Spleen (tissue), 13 donors: ENCODE measurements at regions of chr4 and their contacts with region 1.

Region 1: DNA sequence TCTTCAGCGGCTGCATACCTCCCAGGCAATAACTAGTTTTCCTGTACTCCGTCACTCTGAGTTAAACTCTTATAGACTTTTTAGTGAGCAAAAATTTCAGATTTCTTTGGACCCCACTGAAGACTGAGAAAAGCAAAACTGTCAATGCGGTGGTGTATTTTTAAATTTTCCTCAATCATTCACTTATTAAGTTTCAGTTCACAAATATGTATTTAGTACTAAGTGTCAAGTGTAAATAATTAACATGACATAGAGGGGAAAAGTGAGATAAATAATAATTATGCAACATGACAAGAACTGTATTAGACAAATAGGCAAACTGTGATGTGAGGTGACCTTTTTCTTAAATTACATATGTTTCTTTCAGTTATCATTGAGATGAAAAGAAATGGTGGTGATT is 124.4 kb downstream of the NAF1 start:
- DNase-seq: no peak
- H3K4me3 ChIP-seq: no peak overlapping the region
- H3K27ac ChIP-seq: no peak overlapping the region
- H3K4me1 ChIP-seq: no peaks in the 10 kb centered on the region
- H3K27me3 ChIP-seq: no peaks in the 10 kb centered on the region
- CTCF ChIP-seq: no peak
- POLR2A ChIP-seq: no peak

Region 2: GRCh38 chr4:162497564-162498167 is 544.6 kb before region 1 on chr4:
- intact Hi-C with region 1: loop called (anchors 10 kb)
- DNase-seq: no peak
- H3K4me3 ChIP-seq: no peak overlapping the region
- H3K27ac ChIP-seq: no peak overlapping the region
- H3K4me1 ChIP-seq: no peaks in the 10 kb centered on the region
- H3K27me3 ChIP-seq: peaks cover 0 to 4% (median 0%) of the 10 kb centered on the region in 7 donors
- CTCF ChIP-seq: peak; percentile 36 to 76 (median 65)
- POLR2A ChIP-seq: no peak

Region 3: GRCh38 chr4:162878096-162878495 is 164.2 kb before region 1 on chr4:
- intact Hi-C with region 1: no loop called
- DNase-seq: no peak
- H3K4me3 ChIP-seq: no peak overlapping the region
- H3K27ac ChIP-seq: no peak overlapping the region
- H3K4me1 ChIP-seq: no peaks in the 10 kb centered on the region
- H3K27me3 ChIP-seq: no peaks in the 10 kb centered on the region
- CTCF ChIP-seq: no peak
- POLR2A ChIP-seq: no peak